ENCODE measurements at regions of chr21 and their contacts with region 1.

Region 1: DNA sequence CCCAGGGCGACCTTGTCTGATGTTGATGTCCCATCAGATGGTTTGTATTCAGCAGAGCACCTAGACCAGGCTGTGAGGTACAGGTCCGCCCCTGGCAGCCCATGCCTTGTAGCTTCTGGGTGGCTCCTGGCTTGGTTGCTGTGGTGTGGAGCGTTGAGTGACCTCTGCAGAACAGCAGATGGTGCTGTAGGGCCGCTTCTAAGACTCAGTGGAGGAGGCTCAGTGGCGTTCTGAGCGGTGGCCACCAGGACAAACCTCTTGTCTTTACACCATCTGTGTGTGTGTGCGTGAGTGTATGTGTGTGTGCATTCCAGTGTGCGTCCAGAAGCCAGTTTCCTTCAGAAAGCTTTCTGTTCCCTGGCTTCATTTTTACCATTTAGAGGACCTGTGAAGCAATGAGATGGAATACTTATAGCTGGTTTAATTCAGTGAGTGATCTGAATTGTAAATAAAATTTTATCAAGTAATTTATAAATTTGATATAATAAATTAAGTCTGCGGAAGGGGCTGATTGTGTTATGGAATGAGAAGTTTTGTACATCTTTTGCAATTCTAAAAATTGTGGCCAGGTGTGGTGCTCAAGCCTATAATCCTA is 66.1 kb downstream of the ADARB1 start:
- DNase-seq: peak; percentile 78
- H3K4me3 ChIP-seq: no peak overlapping the region
- CTCF ChIP-seq: peak; percentile 98

Region 2: DNA sequence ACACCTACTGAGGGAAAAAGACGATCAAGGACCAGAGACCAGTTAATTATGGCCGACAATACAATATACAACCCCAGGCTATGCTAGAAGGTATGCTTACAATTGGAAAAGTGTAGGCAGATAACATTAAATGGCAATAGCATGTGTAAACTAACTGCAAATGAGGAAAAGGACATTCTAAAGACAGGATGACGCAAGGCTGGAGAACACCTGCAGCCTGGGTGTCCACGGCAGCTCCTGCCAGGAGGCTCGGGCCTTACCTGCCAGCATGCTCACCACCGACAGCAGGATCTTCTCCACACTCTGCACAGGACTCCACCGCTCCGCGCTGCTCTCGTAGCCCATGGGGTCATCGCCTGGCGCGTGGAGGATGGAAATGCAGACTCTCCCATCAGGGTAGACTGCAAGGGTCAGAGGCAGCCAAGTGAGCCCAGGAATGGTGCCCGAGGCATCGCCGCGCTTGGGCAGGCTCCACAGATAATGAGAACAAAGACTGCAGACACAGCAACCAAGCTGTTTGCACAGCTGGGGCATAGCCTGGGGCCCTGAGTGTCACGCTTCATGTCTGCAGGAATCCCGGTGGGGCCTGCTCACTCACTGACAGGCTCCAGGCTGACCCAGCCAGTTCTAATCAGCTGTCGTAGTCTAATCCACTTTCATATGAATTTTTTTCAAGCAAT is 367.0 kb before region 1 on chr21:
- CTCF ChIA-PET with region 1: no interaction called
- POLR2A ChIA-PET with region 1: no interaction called
- DNase-seq: no peak
- H3K4me3 ChIP-seq: no peak overlapping the region
- CTCF ChIP-seq: no peak

Region 3: GRCh38 chr21:44927587-44928461 is 212.6 kb before region 1 on chr21:
- CTCF ChIA-PET with region 1: interaction called, 30 read pairs
- POLR2A ChIA-PET with region 1: no interaction called
- DNase-seq: no peak
- H3K4me3 ChIP-seq: no peak overlapping the region; the same call in 1 of the 2 replicates
- CTCF ChIP-seq: peak; percentile 18

Region 4: DNA sequence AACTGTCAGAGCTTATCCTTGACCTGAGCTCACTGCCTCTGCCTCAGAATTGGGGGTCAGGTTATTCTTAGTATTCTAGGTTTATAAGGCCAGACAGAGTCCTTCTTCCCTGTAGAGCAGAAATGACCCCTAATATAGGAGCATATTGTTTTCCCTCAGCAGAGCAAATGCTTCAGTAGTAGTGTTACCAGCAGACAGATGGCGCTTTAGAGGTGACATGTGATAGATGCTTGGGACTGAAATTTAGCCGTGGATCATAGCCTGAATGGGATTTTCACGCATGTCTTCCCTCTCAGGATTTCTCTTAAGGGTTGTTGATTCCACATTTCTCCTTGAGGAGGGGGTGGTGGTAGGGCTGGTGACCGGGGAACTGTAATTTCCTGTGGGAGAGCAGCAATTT is 41.6 kb before region 1 on chr21:
- CTCF ChIA-PET with region 1: interaction called, 61 read pairs
- POLR2A ChIA-PET with region 1: no interaction called
- DNase-seq: no peak
- H3K4me3 ChIP-seq: no peak overlapping the region
- CTCF ChIP-seq: peak; percentile 36

Region 5: GRCh38 chr21:45152265-45152746 is 11.9 kb after region 1 on chr21:
- CTCF ChIA-PET with region 1: interaction called, 135 read pairs
- POLR2A ChIA-PET with region 1: no interaction called
- DNase-seq: no peak
- H3K4me3 ChIP-seq: no peak overlapping the region
- CTCF ChIP-seq: peak; percentile 73

Region 6: GRCh38 chr21:45276596-45276995 is 136.2 kb after region 1 on chr21:
- CTCF ChIA-PET with region 1: interaction called, 38 read pairs
- POLR2A ChIA-PET with region 1: no interaction called
- DNase-seq: no peak
- H3K4me3 ChIP-seq: no peak overlapping the region
- CTCF ChIP-seq: no peak

Region 7: GRCh38 chr21:45432575-45433255 is 292.3 kb after region 1 on chr21:
- CTCF ChIA-PET with region 1: interaction called, 75 read pairs
- POLR2A ChIA-PET with region 1: no interaction called
- DNase-seq: no peak
- H3K4me3 ChIP-seq: no peak overlapping the region
- CTCF ChIP-seq: no peak

Measured in AG04449 (cell line).